Activated T-helper 1 cell treated with anti-CD3 and anti-CD28 coated beads, Interleukin-12 subunit alpha, Interleukin-12 subunit beta, Interleukin-2, Interleukin-4 antibody, amounts not matched to agents 30 ng/mL and 10 ng/mL and 1 ng/mL, durations not matched to agents 14 hours and 24 hours and 36 hours (primary cell): ENCODE measurements at regions of chr3 and their contacts with region 1.

Region 1: GRCh38 chr3:141192345-141192744 is 39.3 kb upstream of the PXYLP1 start:
- DNase-seq: peak; percentile 89
- H3K4me3 Mint-ChIP-seq: no peak overlapping the region
- H3K27ac Mint-ChIP-seq: peak overlapping the region; percentile 50
- H3K4me1 Mint-ChIP-seq: peaks cover 15% of the 10 kb centered on the region
- H3K27me3 Mint-ChIP-seq: peaks cover 25% of the 10 kb centered on the region

Region 2: GRCh38 chr3:140898340-140899180 is 293.8 kb before region 1 on chr3:
- intact Hi-C with region 1: loop called (anchors 1 kb)
- DNase-seq: no peak
- H3K4me3 Mint-ChIP-seq: no peak overlapping the region
- H3K27ac Mint-ChIP-seq: no peak overlapping the region
- H3K4me1 Mint-ChIP-seq: no peaks in the 10 kb centered on the region
- H3K27me3 Mint-ChIP-seq: peaks cover 12% of the 10 kb centered on the region

Region 3: GRCh38 chr3:141000027-141000663 is 192.2 kb before region 1 on chr3:
- intact Hi-C with region 1: loop called (anchors 1 kb)
- DNase-seq: peak; percentile 29
- H3K4me3 Mint-ChIP-seq: no peak overlapping the region
- H3K27ac Mint-ChIP-seq: no peak overlapping the region
- H3K4me1 Mint-ChIP-seq: peaks cover 5% of the 10 kb centered on the region
- H3K27me3 Mint-ChIP-seq: peaks cover 5% of the 10 kb centered on the region

Region 4: DNA sequence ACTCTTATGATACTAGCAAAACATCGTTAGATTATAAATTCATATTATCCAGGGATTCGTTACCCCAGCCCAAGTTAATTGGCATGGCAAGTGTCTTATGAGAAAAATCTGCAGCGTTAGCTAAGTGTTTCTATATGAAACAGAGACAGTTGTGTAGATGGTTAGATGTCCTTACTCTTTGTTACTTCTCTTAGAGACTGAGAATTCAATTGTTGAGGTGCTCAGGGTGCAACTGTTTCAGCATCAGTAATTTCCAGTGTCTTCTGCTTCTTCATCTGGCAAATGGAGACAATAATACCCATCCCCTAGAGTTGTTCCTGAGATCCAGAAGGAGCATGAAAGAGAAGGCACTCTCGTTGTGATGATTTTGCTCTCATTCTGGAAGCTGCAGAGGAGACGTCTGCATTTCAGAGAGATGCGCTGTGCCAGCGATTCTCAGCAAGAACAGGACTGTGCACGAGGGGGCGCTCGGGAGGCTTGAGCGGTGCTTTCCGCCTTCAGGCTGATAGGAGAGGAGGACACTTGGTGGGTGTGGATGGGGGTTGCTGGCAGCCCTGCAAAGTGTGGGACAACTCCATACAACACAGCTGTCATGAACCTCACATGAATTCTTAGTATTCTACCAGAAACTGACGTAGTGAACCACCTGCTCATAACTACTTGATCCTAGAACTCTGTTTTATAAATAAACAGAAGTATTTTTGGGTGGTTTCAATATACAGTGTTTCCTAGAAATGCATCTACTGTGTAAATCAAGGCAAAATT is 180.9 kb before region 1 on chr3:
- intact Hi-C with region 1: loop called (anchors 1 kb)
- DNase-seq: peak; percentile 64
- H3K4me3 Mint-ChIP-seq: no peak overlapping the region
- H3K27ac Mint-ChIP-seq: peak overlapping the region; percentile 25
- H3K4me1 Mint-ChIP-seq: peaks cover 11% of the 10 kb centered on the region
- H3K27me3 Mint-ChIP-seq: peaks cover 22% of the 10 kb centered on the region

Region 5: GRCh38 chr3:141105828-141106628 is 86.3 kb before region 1 on chr3:
- intact Hi-C with region 1: loop called (anchors 1 kb)
- DNase-seq: peak; percentile 42
- H3K4me3 Mint-ChIP-seq: no peak overlapping the region
- H3K27ac Mint-ChIP-seq: no peak overlapping the region
- H3K4me1 Mint-ChIP-seq: no peaks in the 10 kb centered on the region
- H3K27me3 Mint-ChIP-seq: peaks cover 3% of the 10 kb centered on the region

Region 6: GRCh38 chr3:141255846-141256261 is 63.5 kb after region 1 on chr3:
- intact Hi-C with region 1: loop called (anchors 1 kb)
- DNase-seq: peak; percentile 31
- H3K4me3 Mint-ChIP-seq: no peak overlapping the region
- H3K27ac Mint-ChIP-seq: peak overlapping the region; percentile 59
- H3K4me1 Mint-ChIP-seq: peaks cover 56% of the 10 kb centered on the region
- H3K27me3 Mint-ChIP-seq: no peaks in the 10 kb centered on the region

Region 7: DNA sequence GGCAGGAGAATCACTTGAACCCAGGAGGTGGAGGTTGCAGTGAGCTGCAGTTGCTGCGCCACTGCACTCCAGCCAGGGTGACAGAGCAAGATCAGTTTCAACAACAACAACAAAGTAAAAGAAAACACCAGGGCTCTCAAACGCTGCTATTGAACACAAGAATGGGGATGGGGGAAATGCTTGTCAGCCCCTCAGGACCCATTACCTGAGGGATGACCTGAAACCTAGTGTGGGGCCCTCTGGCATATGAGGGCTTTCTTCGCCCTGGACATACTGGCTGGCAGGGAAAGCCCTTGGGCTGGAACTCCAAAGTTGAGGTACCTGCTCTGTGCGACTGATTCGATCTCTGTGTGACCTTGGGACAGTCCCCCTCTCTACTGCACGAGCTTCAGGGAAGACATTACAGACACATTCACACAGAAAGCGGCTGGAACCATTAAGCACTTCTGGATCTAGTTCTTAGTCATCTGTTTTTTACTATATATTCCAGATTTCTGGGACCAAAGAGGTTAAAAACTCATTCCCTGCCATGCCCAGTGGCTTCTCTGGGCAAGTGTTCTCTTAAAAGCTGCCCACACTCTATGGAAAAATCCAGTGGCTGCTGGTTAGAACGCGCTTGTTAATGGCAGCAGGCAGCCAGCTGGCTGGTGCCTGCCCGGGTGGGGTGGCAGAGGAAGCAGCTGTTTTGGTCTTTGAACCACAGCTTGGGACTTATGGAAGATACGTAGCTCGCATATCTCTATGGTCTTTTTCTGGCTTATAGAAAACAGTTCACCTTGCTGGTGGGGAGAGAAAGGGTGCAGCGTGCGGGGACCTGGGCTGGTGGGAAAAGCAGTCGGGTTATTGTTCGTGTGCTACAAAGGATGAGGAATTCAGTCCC is 741.3 kb after region 1 on chr3:
- intact Hi-C with region 1: no loop called
- DNase-seq: no peak
- H3K4me3 Mint-ChIP-seq: no peak overlapping the region
- H3K27ac Mint-ChIP-seq: no peak overlapping the region
- H3K4me1 Mint-ChIP-seq: no peaks in the 10 kb centered on the region
- H3K27me3 Mint-ChIP-seq: no peaks in the 10 kb centered on the region